GM12878 (cell line): ENCODE measurements at regions of chr1 and their contacts with region 1.

Region 1: DNA sequence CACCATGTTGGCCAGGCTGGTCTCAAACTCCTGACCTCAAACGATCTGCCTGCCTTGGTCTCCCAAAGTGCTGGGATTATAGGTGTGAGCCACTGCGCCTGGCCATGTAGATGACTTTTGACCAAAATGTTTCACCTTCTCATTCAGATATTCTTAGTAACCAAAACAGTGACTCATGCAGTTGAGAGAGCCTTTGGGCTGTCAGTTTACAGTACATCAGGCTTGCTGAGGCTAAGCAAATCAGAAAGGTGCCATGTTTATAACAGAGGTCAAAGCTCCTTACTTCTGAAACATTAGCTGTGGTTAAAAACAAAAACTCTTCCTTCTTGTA is 21.0 kb downstream of the CNIH4 start:
- DNase-seq: peak; percentile 62
- ATAC-seq: peak; percentile 76
- H3K4me3 ChIP-seq: no peak overlapping the region
- H3K27ac ChIP-seq: 0 out of 2 replicates have a peak overlapping the region, but pooled peaks have one; percentile 3
- H3K4me1 ChIP-seq: peaks cover 55% of the 10 kb centered on the region
- H3K27me3 ChIP-seq: no peaks in the 10 kb centered on the region
- CTCF ChIP-seq: no peak
- EP300 ChIP-seq: no peak
- POLR2A ChIP-seq: no peak
- RAD21 ChIP-seq: no peak

Region 2: GRCh38 chr1:224356685-224357625 is 20.7 kb before region 1 on chr1 and contains the start of gene CNIH4:
- CTCF ChIA-PET with region 1: interaction called, 12 read pairs
- POLR2A ChIA-PET with region 1: interaction called, 4 read pairs
- RAD21 ChIA-PET with region 1: interaction called, 9 read pairs
- SMC1A ChIA-PET with region 1: interaction called, 12 read pairs
- in situ Hi-C with region 1: no loop called
- intact Hi-C with region 1: no loop called
- DNase-seq: peak; percentile 79
- ATAC-seq: peak; percentile 98
- H3K4me3 ChIP-seq: peak within 1 kb of the TSS; percentile 85
- H3K27ac ChIP-seq: peak within 1 kb of the TSS; percentile 30; the same call in 1 of the 2 replicates
- H3K4me1 ChIP-seq: no peaks in the 10 kb centered on the region
- H3K27me3 ChIP-seq: no peaks in the 10 kb centered on the region
- CTCF ChIP-seq: no peak
- EP300 ChIP-seq: no peak
- POLR2A ChIP-seq: peak; percentile 95
- RAD21 ChIP-seq: no peak
- polyA plus RNA-seq, gene CNIH4: 134 to 173 TPM